Activated CD4-positive, alpha-beta T cell treated with anti-CD3 and anti-CD28 coated beads for 36 hours (primary cell): ENCODE measurements at regions of chr1 and their contacts with region 1.

Region 1: DNA sequence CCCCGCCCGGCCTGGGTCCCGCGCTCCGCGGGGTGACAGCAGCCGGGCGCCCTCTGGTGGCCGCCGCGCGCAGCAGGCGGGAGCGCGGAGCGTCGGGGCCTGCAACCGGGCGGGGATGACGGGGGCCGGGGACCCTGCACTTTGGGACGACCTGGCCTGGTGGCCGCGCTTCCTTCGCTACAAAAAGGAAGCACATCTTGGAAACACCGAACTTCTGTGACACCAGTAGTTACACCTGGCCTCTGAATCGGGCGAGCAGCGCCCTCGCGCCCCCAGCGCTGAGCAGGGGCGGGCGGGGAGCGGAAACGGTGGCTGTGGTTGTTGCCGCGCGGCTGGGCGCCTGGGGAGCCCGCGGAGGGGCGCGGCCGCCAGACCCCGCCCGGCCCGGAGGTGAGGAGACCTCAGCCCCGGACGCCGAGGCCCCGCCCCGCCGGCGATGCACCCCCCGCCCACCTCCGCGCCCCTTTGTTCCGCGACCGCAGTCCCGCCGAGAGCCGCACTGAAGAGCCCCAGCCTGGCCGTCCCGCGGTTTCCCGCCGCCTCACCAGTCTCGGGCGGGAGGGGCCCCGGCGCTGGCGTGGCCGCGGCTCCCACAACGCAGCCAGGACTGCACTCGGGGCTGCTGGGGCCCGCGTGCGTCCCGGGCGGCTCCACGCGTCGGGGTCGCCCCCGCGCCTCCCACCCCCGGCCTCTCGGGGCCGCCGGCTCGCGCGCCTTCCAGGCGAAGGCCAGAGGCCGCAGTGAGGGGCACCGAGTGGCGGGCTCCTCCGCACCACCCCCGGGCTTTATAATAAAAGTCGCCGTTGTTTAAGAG is 59.3 kb downstream of the H3-3A start:
- DNase-seq: peak; percentile 86
- ATAC-seq: peak; percentile 79
- H3K4me3 Mint-ChIP-seq: peak overlapping the region; percentile 68
- H3K27ac Mint-ChIP-seq: peak overlapping the region; percentile 60
- H3K4me1 Mint-ChIP-seq: peaks cover 20% of the 10 kb centered on the region
- H3K27me3 Mint-ChIP-seq: no peaks in the 10 kb centered on the region

Region 2: DNA sequence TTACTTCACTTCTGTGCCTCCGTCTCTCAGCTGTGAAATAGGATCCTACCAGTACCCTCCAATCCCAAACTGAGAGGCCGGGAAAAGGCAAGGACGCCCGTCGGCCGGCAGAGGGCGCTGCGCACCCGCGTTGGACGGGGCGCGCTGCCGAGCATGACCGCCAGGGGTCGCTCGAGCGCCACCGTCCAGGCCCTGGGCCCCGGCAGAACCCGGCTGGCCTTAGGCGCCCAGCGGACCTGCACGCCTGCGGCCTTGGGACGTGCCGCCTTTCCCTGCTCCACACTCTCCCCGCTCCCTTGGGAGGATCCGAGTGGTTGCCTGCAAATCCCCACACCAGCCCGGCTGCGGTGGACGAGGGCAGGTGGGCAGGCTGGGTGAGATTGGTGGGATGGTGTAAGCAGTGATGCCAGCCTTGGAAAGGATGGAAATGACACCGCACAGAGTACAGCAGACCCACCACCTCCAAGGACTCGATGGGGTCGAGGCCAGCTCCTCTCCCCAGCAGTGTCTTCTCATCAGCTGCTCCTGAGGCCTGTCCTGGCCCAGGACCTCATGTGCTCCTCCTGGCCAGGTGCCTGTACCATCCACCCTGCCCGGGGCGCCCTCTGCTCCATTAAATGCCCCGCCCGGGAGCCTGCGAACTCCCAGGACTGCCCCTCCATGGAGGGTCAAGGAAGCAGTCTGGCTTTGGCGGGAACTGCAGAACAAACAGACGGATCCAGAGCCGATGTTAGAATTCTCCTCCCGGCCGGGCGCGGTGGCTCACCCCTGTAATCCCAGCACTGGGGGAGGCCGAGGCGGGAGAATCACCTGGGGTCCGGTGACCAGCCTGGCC is 646.6 kb before region 1 on chr1:
- CTCF ChIA-PET with region 1: no interaction called
- POLR2A ChIA-PET with region 1: no interaction called
- intact Hi-C with region 1: loop called in 1 of 2 experiments (anchors 2 kb)
- DNase-seq: peak; percentile 80
- ATAC-seq: peak; percentile 70
- H3K4me3 Mint-ChIP-seq: no peak overlapping the region
- H3K27ac Mint-ChIP-seq: no peak overlapping the region
- H3K4me1 Mint-ChIP-seq: peaks cover 41% of the 10 kb centered on the region
- H3K27me3 Mint-ChIP-seq: no peaks in the 10 kb centered on the region

Region 3: DNA sequence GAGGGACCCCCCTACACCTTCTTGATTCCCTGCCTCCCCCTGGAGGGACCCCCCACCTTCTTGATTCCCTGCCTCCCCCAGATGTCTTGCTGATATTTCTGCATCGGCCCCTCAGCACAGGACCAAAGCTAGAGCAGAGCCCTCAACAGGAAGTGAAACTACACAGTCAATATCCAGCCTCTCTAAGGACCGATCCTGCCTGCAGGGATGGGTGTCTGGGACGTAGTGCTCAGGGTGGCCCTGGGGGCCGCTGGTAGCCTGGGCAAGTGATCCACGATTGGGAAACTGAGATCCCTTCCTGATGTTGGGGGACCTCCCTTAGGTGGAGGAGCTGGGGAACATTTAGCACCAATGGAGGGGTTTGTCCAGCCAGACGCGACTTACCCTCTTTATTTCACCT is 176.8 kb before region 1 on chr1:
- CTCF ChIA-PET with region 1: no interaction called
- POLR2A ChIA-PET with region 1: no interaction called
- intact Hi-C with region 1: no loop called
- DNase-seq: no peak
- ATAC-seq: peak; percentile 75
- H3K4me3 Mint-ChIP-seq: no peak overlapping the region
- H3K27ac Mint-ChIP-seq: no peak overlapping the region
- H3K4me1 Mint-ChIP-seq: peaks cover 9% of the 10 kb centered on the region
- H3K27me3 Mint-ChIP-seq: peaks cover 3% of the 10 kb centered on the region

Region 4: DNA sequence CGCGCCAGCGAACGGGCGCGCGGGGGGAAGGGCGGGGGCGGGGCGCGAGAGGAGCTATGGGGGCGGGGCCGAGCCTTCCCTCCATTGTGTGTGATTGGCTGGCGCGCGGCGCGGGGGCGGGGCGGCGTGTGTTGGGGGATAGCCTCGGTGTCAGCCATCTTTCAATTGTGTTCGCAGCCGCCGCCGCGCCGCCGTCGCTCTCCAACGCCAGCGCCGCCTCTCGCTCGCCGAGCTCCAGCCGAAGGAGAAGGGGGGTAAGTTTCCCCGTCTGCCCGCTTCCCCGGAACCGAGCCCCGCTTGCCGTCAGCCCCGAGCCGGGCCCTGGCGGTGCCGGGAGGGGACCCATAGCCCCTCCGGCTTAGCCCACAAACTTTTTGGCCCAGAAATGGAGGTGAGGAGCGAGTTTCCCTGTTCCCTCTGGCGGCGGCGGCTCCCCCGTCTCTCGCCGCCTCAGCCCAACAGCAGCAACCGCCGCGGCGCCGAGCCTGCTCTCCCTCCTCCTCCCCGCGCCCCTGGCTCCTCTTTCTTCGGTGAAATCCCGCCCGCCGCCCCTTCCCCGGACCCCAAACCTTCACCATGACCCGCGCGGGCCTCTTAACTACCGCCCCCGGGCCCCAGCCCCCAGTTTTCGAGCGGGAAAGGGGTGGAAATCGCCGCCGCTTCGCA is 59.1 kb before region 1 on chr1 and contains the start of gene H3-3A:
- CTCF ChIA-PET with region 1: interaction called, 11 read pairs
- POLR2A ChIA-PET with region 1: interaction called, 8 read pairs
- intact Hi-C with region 1: loop called (anchors 1 kb)
- DNase-seq: peak; percentile 99
- ATAC-seq: peak; percentile 87
- H3K4me3 Mint-ChIP-seq: peak within 1 kb of the TSS; percentile 97
- H3K27ac Mint-ChIP-seq: peak within 1 kb of the TSS; percentile 100
- H3K4me1 Mint-ChIP-seq: peaks cover 34% of the 10 kb centered on the region
- H3K27me3 Mint-ChIP-seq: no peaks in the 10 kb centered on the region
- total RNA-seq, gene H3-3A: 176 to 275 TPM

Region 5: GRCh38 chr1:226135059-226135651 is 13.4 kb after region 1 on chr1:
- CTCF ChIA-PET with region 1: interaction called, 22 read pairs
- POLR2A ChIA-PET with region 1: no interaction called
- intact Hi-C with region 1: no loop called
- DNase-seq: no peak
- ATAC-seq: no peak
- H3K4me3 Mint-ChIP-seq: no peak overlapping the region
- H3K27ac Mint-ChIP-seq: no peak overlapping the region
- H3K4me1 Mint-ChIP-seq: no peaks in the 10 kb centered on the region
- H3K27me3 Mint-ChIP-seq: no peaks in the 10 kb centered on the region

Region 6: DNA sequence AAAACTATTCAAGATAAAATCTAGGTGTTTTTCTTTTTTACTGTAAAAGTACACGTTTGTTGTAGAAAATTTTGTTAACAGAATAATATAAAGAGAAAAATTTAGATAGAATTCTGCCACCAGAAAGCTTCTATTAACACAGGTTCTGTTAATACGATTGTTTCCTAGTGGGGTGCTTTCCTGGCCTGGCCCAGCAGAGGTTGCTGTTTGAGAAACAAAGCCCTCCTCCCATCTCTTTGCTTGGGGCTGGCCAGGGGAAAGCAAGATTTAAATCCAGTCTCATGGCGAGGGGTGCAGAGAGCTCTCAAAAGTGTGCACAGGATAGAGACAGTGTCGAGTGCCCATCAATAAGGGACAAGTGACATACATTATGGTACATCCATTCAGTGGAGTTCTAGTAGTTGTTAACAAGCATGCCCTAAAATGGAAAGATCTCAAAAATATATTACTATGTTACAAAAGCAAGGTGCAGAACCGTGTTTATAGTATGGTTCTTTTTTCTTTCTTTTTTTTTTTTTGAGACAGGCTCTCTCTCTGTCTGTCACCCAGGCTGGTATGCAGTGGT is 79.3 kb after region 1 on chr1:
- CTCF ChIA-PET with region 1: interaction called, 67 read pairs
- POLR2A ChIA-PET with region 1: interaction called, 3 read pairs
- intact Hi-C with region 1: loop called (anchors 1 kb)
- DNase-seq: peak; percentile 31
- ATAC-seq: no peak
- H3K4me3 Mint-ChIP-seq: no peak overlapping the region
- H3K27ac Mint-ChIP-seq: no peak overlapping the region
- H3K4me1 Mint-ChIP-seq: no peaks in the 10 kb centered on the region
- H3K27me3 Mint-ChIP-seq: peaks cover 2% of the 10 kb centered on the region

Region 7: DNA sequence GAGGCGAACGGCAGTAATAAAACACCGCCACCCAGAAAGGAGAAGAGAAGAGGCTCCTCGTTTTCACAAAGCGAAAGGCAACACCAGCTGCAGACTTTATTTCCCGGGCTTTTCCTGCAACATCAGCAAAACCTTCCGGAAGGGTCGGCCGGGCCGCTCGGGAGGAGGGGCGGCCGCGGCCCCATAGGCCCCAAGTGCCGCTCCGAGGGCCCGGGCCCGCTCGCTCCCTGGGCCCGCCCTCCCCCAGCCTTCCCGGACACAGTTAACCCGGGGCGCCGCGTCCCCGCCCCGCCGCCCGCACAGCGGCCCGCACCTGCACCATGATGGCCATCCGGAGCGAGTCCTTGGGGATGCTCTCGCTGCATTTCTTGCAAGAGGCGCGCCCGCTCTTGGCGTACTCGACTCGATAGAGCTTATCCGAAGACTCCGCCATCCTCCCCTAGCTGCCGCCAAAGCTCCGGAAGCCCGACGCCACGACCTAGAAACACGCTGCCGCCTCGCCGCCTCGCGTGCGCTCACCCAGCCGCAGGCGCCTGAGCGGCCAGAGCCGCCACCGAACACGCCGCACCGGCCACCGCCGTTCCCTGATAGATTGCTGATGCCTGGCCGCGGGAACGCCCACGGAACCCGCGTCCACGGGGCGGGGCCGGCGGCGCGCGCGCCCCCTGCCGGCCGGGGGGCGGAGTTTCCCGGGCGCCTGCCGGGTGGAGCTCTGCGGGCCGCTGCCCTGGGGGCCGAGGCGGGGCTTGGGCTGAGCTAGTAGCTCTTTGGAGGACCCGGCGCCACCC is 285.9 kb after region 1 on chr1 and contains the start of gene PARP1:
- CTCF ChIA-PET with region 1: interaction called, 11 read pairs
- POLR2A ChIA-PET with region 1: interaction called, 7 read pairs
- intact Hi-C with region 1: loop called (anchors 1 to 5 kb)
- DNase-seq: peak; percentile 93
- ATAC-seq: peak; percentile 94
- H3K4me3 Mint-ChIP-seq: peak within 1 kb of the TSS; percentile 88
- H3K27ac Mint-ChIP-seq: peak within 1 kb of the TSS; percentile 94
- H3K4me1 Mint-ChIP-seq: peaks cover 42% of the 10 kb centered on the region
- H3K27me3 Mint-ChIP-seq: no peaks in the 10 kb centered on the region
- total RNA-seq, gene PARP1: 237 to 242 TPM